B cell (primary cell): ENCODE measurements at regions of chr2 and their contacts with region 1.

Region 1: GRCh38 chr2:106104332-106105062 is 89.6 kb downstream of the UXS1 start:
- DNase-seq: peak; percentile 72
- ATAC-seq: peak; percentile 62
- H3K4me3 ChIP-seq: no peak overlapping the region
- H3K4me3 Mint-ChIP-seq: no peak overlapping the region
- H3K27ac ChIP-seq: no peak overlapping the region
- H3K27ac Mint-ChIP-seq: no peak overlapping the region
- H3K4me1 ChIP-seq: no peaks in the 10 kb centered on the region
- H3K4me1 Mint-ChIP-seq: peaks cover 13% of the 10 kb centered on the region
- H3K27me3 ChIP-seq: no peaks in the 10 kb centered on the region
- H3K27me3 Mint-ChIP-seq: no peaks in the 10 kb centered on the region
- CTCF ChIP-seq: peak; percentile 98

Region 2: GRCh38 chr2:105369747-105370690 is 734.5 kb before region 1 on chr2:
- CTCF ChIA-PET with region 1: interaction called, 4 read pairs
- POLR2A ChIA-PET with region 1: no interaction called
- intact Hi-C with region 1: loop called (anchors 10 kb)
- DNase-seq: peak; percentile 83
- ATAC-seq: peak; percentile 99
- H3K4me3 ChIP-seq: no peak overlapping the region
- H3K4me3 Mint-ChIP-seq: no peak overlapping the region
- H3K27ac ChIP-seq: no peak overlapping the region
- H3K27ac Mint-ChIP-seq: no peak overlapping the region
- H3K4me1 ChIP-seq: peaks cover 0 to 3% of the 10 kb centered on the region in 2 donors
- H3K4me1 Mint-ChIP-seq: peaks cover 4% of the 10 kb centered on the region
- H3K27me3 ChIP-seq: no peaks in the 10 kb centered on the region
- H3K27me3 Mint-ChIP-seq: no peaks in the 10 kb centered on the region
- CTCF ChIP-seq: peak; percentile 89

Region 3: DNA sequence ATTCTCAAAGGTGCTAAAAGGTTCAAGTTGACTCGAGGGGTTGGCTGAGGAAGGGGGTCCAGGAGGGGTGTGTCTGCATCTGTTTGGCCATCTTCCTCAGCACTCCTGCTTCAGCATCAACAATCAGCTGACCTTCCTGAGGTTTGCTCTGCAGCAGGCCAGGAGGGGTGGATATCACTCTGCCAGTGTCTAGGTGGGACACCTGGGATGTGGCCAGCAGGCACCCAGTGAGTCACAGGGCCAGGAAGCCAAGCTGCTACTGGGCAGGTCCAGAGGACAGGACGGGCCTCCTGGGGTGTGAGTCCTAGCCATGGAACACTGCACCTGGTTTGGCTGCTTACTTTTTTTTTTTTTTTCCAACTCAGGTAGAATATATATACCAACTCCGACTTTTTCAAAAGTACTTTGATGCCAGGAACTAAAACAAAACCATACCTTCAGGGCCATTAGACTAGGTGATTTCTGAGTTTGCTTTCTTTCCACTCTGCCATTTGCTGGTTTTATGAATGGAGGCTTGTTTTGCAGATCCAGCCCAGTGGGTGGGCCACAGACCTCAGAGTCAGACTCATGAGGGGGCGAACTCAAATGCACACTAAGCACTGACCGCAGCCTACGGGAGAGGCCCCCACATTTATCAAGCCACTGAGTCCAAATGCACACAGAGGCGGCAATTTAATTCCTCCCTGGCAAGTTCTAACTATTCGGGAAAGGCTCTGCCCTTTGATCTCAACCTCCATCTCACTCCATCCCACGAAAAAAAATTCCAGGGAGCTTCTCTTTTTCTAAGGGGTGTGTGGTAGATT is 13.6 kb after region 1 on chr2:
- CTCF ChIA-PET with region 1: interaction called, 10 read pairs
- POLR2A ChIA-PET with region 1: no interaction called
- intact Hi-C with region 1: no loop called
- DNase-seq: no peak
- ATAC-seq: no peak
- H3K4me3 ChIP-seq: no peak overlapping the region
- H3K4me3 Mint-ChIP-seq: no peak overlapping the region
- H3K27ac ChIP-seq: no peak overlapping the region
- H3K27ac Mint-ChIP-seq: no peak overlapping the region
- H3K4me1 ChIP-seq: peaks cover 6 to 7% of the 10 kb centered on the region in 2 donors
- H3K4me1 Mint-ChIP-seq: peaks cover 11% of the 10 kb centered on the region
- H3K27me3 ChIP-seq: no peaks in the 10 kb centered on the region
- H3K27me3 Mint-ChIP-seq: no peaks in the 10 kb centered on the region
- CTCF ChIP-seq: no peak

Region 4: DNA sequence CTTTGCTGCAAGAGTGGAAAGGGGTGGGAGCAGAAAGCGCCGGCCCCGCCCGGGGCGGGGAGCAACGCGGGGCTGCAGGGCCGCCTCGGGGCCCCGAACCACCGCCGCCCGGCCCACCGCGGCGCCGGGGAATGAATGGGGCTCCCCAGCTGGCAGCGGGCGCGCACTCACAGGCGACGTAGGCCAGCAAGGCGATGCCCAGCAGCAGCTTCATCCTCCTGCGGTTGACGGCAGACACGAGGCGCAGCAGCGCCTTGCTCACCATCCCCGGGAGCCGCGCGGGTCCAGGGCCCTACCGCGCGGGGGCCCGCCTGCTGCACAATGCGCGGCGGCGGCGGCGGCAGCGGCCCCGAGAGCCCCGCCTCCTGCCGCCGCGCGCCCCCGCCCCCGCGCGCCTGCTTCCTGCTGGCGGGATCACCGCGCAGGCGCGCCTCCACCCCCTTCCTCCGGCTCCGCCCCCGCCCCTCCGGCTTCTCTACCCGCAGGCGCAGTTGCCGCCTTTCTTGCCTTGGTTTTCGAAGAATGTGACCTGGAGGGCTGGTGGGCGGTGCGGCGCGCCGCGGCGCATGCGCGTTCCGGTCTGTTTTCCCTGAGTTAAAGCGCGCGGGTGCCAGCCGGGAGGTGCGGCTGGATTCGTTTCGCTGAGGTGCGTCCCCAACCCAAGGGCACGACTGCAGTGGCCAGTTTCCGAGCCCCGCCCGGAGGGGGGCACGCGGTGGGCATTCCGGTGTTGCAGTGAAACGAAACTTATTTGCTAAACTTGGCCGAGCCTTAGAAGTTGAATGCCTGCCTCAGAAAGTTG is 89.7 kb after region 1 on chr2 and contains the start of gene UXS1:
- CTCF ChIA-PET with region 1: interaction called, 4 read pairs
- POLR2A ChIA-PET with region 1: no interaction called
- intact Hi-C with region 1: loop called (anchors 5 kb)
- DNase-seq: peak; percentile 98
- ATAC-seq: peak; percentile 82
- H3K4me3 ChIP-seq: peak within 1 kb of the TSS; percentile 67 to 96 (median 91)
- H3K4me3 Mint-ChIP-seq: peak within 1 kb of the TSS; percentile 97
- H3K27ac ChIP-seq: peak within 1 kb of the TSS; percentile 66 to 82
- H3K27ac Mint-ChIP-seq: peak within 1 kb of the TSS; percentile 96
- H3K4me1 ChIP-seq: peaks cover 22 to 35% of the 10 kb centered on the region in 2 donors
- H3K4me1 Mint-ChIP-seq: peaks cover 44% of the 10 kb centered on the region
- H3K27me3 ChIP-seq: no peaks in the 10 kb centered on the region
- H3K27me3 Mint-ChIP-seq: peaks cover 9% of the 10 kb centered on the region
- CTCF ChIP-seq: no peak
- total RNA-seq, gene UXS1: 44.8 and 46.3 TPM in 2 replicates

Region 5: GRCh38 chr2:106542811-106543259 is 438.3 kb after region 1 on chr2:
- CTCF ChIA-PET with region 1: interaction called, 27 read pairs
- POLR2A ChIA-PET with region 1: no interaction called
- intact Hi-C with region 1: loop called (anchors 1 kb)
- DNase-seq: peak; percentile 76
- ATAC-seq: peak; percentile 99
- H3K4me3 ChIP-seq: peak overlapping the region in 2 of 5 experiments; percentile 23 to 32
- H3K4me3 Mint-ChIP-seq: peak overlapping the region; percentile 73
- H3K27ac ChIP-seq: no peak overlapping the region
- H3K27ac Mint-ChIP-seq: no peak overlapping the region
- H3K4me1 ChIP-seq: peaks cover 3 to 4% of the 10 kb centered on the region in 2 donors
- H3K4me1 Mint-ChIP-seq: peaks cover 3% of the 10 kb centered on the region
- H3K27me3 ChIP-seq: peaks cover 0 to 16% (median 0%) of the 10 kb centered on the region in 4 experiments
- H3K27me3 Mint-ChIP-seq: peaks cover 40% of the 10 kb centered on the region
- CTCF ChIP-seq: peak; percentile 99